Mammary epithelial cell (primary cell): ENCODE measurements at regions of chr12 and their contacts with region 1.

Region 1: GRCh38 chr12:2306012-2306411 is 253.2 kb downstream of the CACNA1C start:
- DNase-seq: no peak
- H3K4me3 ChIP-seq: no peak overlapping the region
- H3K27ac ChIP-seq: no peak overlapping the region
- H3K4me1 ChIP-seq: no peaks in the 10 kb centered on the region
- H3K27me3 ChIP-seq: no peaks in the 10 kb centered on the region
- CTCF ChIP-seq: no peak

Region 2: GRCh38 chr12:2319742-2320506 is 13.9 kb after region 1 on chr12:
- CTCF ChIA-PET with region 1: no interaction called
- dilution Hi-C with region 1: no loop called
- in situ Hi-C with region 1: no loop called
- intact Hi-C with region 1: no loop called
- DNase-seq: no peak
- H3K4me3 ChIP-seq: no peak overlapping the region
- H3K27ac ChIP-seq: no peak overlapping the region
- H3K4me1 ChIP-seq: no peaks in the 10 kb centered on the region
- H3K27me3 ChIP-seq: no peaks in the 10 kb centered on the region
- CTCF ChIP-seq: no peak

Region 3: DNA sequence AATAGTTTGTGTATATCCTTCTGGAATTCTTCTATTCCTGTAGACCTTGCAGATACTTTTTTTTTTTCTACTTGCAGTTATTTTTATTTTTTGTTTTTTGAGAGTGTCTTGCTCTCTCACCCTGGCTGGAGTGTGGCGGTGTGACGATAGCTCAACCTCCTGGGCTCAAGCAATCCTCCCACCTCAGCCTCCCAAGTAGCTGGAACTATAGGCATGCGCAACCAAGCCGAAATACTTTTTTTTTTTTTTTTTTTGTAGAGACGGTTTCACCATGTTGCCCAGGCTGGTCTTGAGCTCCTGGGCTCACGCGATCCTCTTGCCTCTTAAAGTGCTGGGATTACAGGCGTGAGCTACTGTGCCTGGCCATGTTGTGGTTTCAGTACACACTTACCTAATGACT is 594.6 kb after region 1 on chr12:
- CTCF ChIA-PET with region 1: interaction called, 16 read pairs
- dilution Hi-C with region 1: no loop called
- in situ Hi-C with region 1: no loop called
- intact Hi-C with region 1: no loop called
- DNase-seq: no peak
- H3K4me3 ChIP-seq: no peak overlapping the region
- H3K27ac ChIP-seq: no peak overlapping the region
- H3K4me1 ChIP-seq: no peaks in the 10 kb centered on the region
- H3K27me3 ChIP-seq: no peaks in the 10 kb centered on the region
- CTCF ChIP-seq: no peak